GM13977 (cell line): ENCODE measurements at regions of chr1 and their contacts with region 1.

Region 1: GRCh38 chr1:25837262-25837875 is 17.6 kb downstream of the MTFR1L start:
- DNase-seq: no peak
- CTCF ChIP-seq: peak; percentile 53

Region 2: GRCh38 chr1:25599969-25600610 is 237.3 kb before region 1 on chr1:
- in situ Hi-C with region 1: no loop called
- DNase-seq: peak; percentile 64
- CTCF ChIP-seq: no peak

Region 3: GRCh38 chr1:26009796-26010460 is 172.6 kb after region 1 on chr1:
- in situ Hi-C with region 1: loop called (anchors 10 kb)
- DNase-seq: no peak
- CTCF ChIP-seq: peak; percentile 8